Activated CD4-positive, alpha-beta memory T cell treated with anti-CD3 and anti-CD28 coated beads, Interleukin-2, amount 10 ng/mL, durations not matched to agents 7 days and 5 days (primary cell): ENCODE measurements at regions of chr9 and their contacts with region 1.

Region 1: DNA sequence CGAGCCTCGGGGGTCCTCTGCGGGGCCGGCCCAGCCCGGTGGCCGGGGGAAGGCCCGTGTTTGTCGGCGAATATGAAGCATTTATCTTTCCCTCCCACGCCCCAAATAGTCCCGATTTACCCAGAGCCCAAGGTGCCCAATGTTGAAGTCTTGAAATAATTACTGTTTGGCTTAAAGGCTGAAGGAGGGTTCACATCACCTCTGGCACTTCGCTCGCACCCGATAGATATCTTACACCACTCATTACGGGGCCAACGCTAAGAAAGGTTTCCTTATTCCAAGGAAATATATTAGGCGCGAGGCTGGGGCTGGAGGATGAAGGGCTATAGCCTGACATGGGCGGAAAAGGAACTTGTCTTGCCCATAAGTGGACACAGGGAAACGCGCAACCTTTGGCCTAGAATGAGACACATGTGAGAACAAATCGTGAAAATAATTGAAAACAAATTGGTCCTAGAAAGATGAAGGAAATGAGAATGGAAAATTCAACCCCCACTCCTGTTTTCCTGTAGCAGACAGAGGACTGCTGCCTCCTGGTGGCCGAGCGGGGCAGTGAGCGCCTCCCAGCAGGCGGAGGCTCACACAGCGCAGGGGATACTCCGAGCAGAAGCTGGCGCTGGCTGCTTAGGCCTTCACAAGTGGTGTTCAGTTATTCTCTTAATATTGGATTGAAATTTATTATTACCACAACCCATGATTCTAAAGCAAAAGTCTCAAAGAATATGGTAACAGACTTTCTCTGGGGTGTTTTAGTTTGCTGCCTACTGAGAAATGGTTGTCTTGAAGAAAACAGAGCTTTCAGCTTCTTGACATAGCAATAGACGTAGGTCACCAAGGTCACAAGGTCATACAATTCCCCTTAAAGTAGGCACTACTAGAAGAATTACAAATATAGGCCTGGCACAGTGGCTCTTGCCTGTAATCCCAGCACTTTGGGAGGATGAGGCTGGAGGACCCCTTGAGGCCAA is 7.9 kb downstream of the CCL21 start:
- DNase-seq: peak; percentile 79
- H3K4me3 Mint-ChIP-seq: peak overlapping the region; percentile 62
- H3K27ac Mint-ChIP-seq: no peak overlapping the region
- H3K4me1 Mint-ChIP-seq: peaks cover 9% of the 10 kb centered on the region
- H3K27me3 Mint-ChIP-seq: peaks cover 19% of the 10 kb centered on the region

Region 2: DNA sequence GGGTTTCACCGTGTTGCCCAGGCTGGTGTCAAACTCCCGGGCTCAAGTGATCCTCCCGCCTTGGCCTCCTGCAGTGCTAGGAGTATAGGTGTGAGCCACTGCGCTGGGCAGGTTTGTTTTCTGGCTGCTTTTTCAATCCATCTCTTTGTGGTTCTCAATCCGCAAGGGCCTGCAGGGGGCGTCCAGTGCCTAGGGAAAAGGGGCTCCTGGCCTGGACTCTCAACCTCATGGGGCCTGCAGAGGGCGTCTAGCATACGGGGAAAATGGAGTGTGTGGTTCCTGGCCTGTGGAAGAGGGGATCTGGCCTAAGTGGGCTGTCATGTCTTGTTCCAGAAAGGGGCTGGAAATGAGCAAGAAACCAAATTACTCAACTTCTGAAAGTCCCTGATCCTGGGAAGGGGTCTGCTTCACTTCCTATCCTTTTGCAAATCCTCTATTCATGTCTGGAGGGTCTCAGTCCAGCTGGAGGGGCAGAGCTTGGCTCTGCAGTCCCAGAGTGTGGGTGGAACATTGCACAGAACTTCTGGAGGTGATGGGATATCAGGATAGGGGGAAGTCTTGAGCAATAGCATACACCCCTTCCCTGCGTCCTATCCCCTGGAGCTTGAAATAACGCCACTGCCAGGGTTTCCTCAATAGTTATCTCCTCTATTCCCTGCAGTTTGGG is 26.9 kb before region 1 on chr9:
- CTCF ChIA-PET with region 1: interaction called, 22 read pairs
- POLR2A ChIA-PET with region 1: no interaction called
- DNase-seq: peak; percentile 46
- H3K4me3 Mint-ChIP-seq: no peak overlapping the region
- H3K27ac Mint-ChIP-seq: no peak overlapping the region
- H3K4me1 Mint-ChIP-seq: peaks cover 2% of the 10 kb centered on the region
- H3K27me3 Mint-ChIP-seq: no peaks in the 10 kb centered on the region

Region 3: GRCh38 chr9:34744295-34745221 is 42.5 kb after region 1 on chr9:
- CTCF ChIA-PET with region 1: no interaction called
- POLR2A ChIA-PET with region 1: no interaction called
- DNase-seq: no peak
- H3K4me3 Mint-ChIP-seq: no peak overlapping the region
- H3K27ac Mint-ChIP-seq: no peak overlapping the region
- H3K4me1 Mint-ChIP-seq: no peaks in the 10 kb centered on the region
- H3K27me3 Mint-ChIP-seq: peaks cover 20% of the 10 kb centered on the region